Activated CD4-positive, alpha-beta memory T cell treated with anti-CD3 and anti-CD28 coated beads for 36 hours (primary cell): ENCODE measurements at regions of chr2 and their contacts with region 1.

Region 1: DNA sequence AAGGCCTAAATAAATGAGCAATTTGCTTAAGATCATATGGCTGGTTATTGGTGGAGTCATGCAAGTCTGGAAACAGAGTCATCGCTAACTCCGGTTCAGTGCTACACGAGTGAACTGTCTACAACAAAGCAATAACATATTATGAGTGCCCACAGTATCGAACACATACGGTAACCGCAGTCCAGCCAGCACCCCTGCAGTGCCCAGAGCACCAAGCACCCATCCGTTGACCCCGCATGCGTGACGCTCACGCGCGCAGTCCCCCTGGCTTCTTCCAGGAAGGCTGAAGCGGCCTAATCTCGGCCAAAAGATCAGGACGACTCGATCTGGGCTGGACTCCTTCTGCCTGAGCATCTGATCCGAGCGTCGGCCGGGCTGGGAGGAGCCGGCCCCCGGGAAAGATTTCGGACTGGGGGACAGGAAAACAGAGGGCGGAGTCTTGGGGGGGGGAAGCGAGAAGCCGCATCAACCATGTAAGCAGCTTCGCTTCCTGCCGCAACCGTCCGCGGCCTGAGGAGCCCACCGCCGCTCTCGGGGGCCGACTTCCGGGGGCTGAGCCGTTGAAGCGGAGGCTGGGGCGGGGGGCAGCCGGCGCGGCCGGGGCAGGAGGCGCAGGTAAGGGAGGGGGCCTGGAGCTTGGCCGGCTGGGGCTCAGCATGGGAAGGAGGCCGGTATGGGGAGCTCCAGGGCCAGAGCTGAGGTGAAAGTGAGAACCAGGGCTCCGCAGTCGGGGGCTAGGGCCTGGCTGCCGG is at the start of gene PIKFYVE:
- DNase-seq: peak; percentile 95
- H3K4me3 Mint-ChIP-seq: peak within 1 kb of the TSS; percentile 89
- H3K27ac Mint-ChIP-seq: peak within 1 kb of the TSS; percentile 98
- H3K4me1 Mint-ChIP-seq: peaks cover 32% of the 10 kb centered on the region
- H3K27me3 Mint-ChIP-seq: no peaks in the 10 kb centered on the region
- total RNA-seq, gene PIKFYVE: 22.4 to 23.7 TPM

Region 2: GRCh38 chr2:206765242-206766056 is 1500.5 kb before region 1 on chr2 and contains the starts of genes FASTKD2 and MDH1B:
- CTCF ChIA-PET with region 1: no interaction called
- POLR2A ChIA-PET with region 1: no interaction called
- intact Hi-C with region 1: loop called (anchors 5 kb)
- DNase-seq: peak; percentile 94
- H3K4me3 Mint-ChIP-seq: peak within 1 kb of the TSS; percentile 93
- H3K27ac Mint-ChIP-seq: peak within 1 kb of the TSS; percentile 96
- H3K4me1 Mint-ChIP-seq: peaks cover 31% of the 10 kb centered on the region
- H3K27me3 Mint-ChIP-seq: no peaks in the 10 kb centered on the region
- total RNA-seq, gene FASTKD2: 31.3 to 32.0 TPM
- total RNA-seq, gene MDH1B: 0.74 to 0.87 TPM

Region 3: GRCh38 chr2:207710814-207711740 is 554.9 kb before region 1 on chr2 and contains the start of gene CCNYL1:
- CTCF ChIA-PET with region 1: no interaction called
- POLR2A ChIA-PET with region 1: no interaction called
- intact Hi-C with region 1: loop called (anchors 5 kb)
- DNase-seq: peak; percentile 99
- H3K4me3 Mint-ChIP-seq: peak within 1 kb of the TSS; percentile 88
- H3K27ac Mint-ChIP-seq: peak within 1 kb of the TSS; percentile 82
- H3K4me1 Mint-ChIP-seq: peaks cover 25% of the 10 kb centered on the region
- H3K27me3 Mint-ChIP-seq: no peaks in the 10 kb centered on the region
- total RNA-seq, gene CCNYL1: 5.7 to 6.4 TPM

Region 4: DNA sequence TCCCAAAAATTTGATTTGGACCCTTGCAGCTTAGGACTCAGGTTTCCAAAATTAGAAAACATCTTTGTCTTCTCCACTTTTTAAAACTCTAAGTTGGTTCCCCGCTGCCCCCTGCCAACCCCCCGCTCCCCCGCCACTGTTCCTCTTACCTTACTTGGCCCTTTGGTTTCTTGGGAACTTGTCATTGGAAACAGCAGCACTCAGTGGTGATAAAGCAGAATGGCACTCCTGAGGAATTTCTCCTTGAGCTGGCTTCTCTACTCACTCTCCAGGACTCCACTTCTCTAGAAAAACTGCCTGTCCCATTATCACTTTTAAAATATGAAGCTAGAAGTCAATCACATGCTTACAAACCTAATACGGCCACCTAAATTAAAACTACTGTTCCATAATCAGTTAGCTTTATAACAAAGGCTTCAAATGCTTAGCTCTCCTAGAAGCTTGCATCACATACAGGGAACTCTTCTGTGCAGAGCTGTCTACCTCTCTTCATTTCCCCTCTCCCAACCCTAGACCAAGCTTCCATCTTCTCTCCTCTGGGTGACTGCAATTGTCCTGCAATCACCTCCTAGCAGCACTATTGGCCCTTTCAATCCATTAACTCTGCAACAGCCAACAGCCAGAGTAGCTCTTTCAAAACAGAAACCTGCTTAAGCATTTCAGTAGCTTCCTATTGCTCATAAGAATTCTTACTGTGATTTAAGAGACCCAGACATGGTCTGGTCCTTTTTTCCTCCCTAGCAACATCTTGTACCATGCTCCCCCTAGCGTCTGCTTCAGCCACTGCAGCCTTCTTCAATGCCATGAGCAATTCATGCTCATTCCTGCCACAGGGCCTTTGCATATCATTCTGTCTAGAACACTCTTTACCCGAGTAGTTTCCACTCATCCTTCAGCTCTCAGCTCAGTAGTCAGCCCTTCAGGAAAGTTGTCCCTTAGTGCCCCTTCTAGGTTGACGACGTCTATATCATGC is 225.5 kb before region 1 on chr2:
- CTCF ChIA-PET with region 1: no interaction called
- POLR2A ChIA-PET with region 1: no interaction called
- intact Hi-C with region 1: no loop called
- DNase-seq: peak; percentile 88
- H3K4me3 Mint-ChIP-seq: no peak overlapping the region
- H3K27ac Mint-ChIP-seq: no peak overlapping the region
- H3K4me1 Mint-ChIP-seq: peaks cover 4% of the 10 kb centered on the region
- H3K27me3 Mint-ChIP-seq: peaks cover 5% of the 10 kb centered on the region

Region 5: DNA sequence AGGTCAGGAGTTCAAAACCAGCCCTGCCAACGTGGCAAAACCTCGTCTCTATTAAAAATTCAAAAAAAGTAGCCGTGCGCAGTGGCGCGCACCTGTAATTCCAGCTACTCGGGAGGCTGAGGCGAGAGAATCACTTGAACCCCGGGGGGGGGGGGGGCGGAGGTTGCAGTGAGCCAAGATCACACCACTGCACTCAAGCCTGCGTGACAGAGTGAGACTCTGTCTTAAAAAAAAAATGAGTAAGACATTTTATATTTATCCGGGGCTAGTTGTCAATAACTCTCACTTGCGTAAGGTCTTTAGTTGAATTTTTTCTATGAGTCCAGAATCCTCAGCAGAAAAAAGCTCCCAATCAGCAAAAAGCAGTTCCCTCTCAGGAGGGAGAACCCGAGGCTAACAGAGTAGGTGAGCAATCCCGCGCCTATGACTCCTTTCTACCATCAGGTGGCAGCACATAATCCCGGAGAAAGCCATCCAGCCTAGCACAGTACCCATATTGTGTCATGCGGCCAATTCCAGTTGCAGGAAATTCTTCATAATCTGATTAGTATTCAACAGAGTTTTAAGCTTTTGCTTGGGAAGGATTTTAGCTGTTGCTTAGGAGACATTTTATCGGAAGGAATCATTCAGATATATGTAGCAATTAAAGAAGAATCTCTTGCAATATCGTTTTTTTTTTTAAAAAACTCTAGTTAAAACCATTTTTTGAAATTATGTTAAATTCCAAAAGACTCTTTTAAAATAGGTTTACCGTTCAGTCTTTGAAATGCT is 90.7 kb before region 1 on chr2:
- CTCF ChIA-PET with region 1: interaction called, 13 read pairs
- POLR2A ChIA-PET with region 1: no interaction called
- intact Hi-C with region 1: no loop called
- DNase-seq: peak; percentile 73
- H3K4me3 Mint-ChIP-seq: no peak overlapping the region
- H3K27ac Mint-ChIP-seq: no peak overlapping the region
- H3K4me1 Mint-ChIP-seq: no peaks in the 10 kb centered on the region
- H3K27me3 Mint-ChIP-seq: peaks cover 12% of the 10 kb centered on the region

Region 6: DNA sequence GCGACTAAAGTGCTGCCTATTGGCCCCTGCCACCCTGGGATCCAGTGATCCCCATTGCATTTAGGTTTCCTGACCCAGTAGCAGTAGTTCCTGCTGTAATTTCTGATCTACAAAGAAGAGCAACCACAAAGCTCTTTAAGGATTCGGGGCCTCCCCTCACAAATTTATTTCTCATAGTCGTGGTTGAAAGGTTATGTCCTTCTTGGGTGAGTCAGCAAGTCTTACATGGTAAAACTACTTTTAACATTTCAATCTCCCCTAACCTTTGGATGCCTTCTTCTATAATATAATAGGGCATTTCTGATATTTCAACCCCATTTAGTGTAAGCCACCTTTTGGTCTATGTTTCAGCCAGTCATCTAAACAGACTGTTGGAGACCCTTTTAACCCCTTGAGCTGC is 15.0 kb after region 1 on chr2:
- CTCF ChIA-PET with region 1: interaction called, 3 read pairs
- POLR2A ChIA-PET with region 1: no interaction called
- intact Hi-C with region 1: loop called (anchors 1 kb)
- DNase-seq: no peak
- H3K4me3 Mint-ChIP-seq: no peak overlapping the region
- H3K27ac Mint-ChIP-seq: peak overlapping the region; percentile 11
- H3K4me1 Mint-ChIP-seq: peaks cover 28% of the 10 kb centered on the region
- H3K27me3 Mint-ChIP-seq: no peaks in the 10 kb centered on the region

Region 7: GRCh38 chr2:209423562-209424198 is 1157.7 kb after region 1 on chr2 and contains the start of gene MAP2:
- CTCF ChIA-PET with region 1: no interaction called
- POLR2A ChIA-PET with region 1: no interaction called
- intact Hi-C with region 1: loop called (anchors 10 kb)
- DNase-seq: peak; percentile 77
- H3K4me3 Mint-ChIP-seq: peak within 1 kb of the TSS; percentile 57
- H3K27ac Mint-ChIP-seq: no peak within 1 kb of the TSS
- H3K4me1 Mint-ChIP-seq: peaks cover 10% of the 10 kb centered on the region
- H3K27me3 Mint-ChIP-seq: peaks cover 25% of the 10 kb centered on the region
- total RNA-seq, gene MAP2: 0.07 to 0.27 TPM

Region 8: DNA sequence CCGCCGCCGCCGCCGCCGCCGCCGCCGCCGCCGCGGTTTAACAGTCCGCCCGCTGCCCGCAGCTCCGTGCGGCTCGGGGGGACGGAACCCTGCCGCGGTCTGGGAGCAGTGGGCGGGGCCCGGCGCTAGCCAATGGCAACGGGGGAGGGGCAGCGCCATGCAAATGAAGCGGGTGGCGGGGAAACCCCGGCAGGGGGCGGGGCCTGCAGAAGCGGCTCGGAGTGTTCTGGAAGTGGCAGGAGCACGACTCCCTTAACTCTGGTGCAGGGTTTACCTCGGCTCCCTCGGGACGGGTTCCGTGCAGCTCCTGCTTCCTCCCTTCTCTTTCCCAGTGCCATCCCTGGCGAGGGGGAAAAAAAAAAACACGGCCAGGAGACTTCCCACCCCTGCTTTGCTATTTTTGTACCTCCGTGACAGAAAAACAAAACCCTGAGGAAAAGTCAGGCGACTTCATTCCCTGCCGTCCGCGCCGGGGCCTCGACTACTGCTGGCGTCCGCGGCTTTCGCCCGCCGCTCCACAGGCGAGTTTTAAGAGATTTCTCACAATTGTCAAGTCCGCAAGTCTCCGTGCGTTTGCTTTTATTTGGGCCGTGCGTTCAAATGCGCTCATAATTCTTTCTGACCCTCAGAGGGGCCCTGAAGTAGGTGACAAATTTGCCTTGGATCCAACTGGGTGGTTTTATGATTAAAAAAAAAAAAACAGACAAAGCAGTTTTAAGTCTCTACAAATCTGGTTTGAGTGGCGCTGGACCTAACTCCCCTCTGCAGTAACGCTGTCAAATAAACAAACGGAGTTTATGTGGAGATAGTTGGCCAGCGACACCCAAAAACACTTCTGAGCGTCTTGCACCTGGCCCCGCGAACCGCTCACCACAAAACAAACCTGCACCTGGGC is 1905.6 kb after region 1 on chr2 and contains the start of gene KANSL1L:
- CTCF ChIA-PET with region 1: no interaction called
- POLR2A ChIA-PET with region 1: no interaction called
- intact Hi-C with region 1: loop called (anchors 5 kb)
- DNase-seq: peak; percentile 97
- H3K4me3 Mint-ChIP-seq: peak within 1 kb of the TSS; percentile 94
- H3K27ac Mint-ChIP-seq: peak within 1 kb of the TSS; percentile 96
- H3K4me1 Mint-ChIP-seq: peaks cover 26% of the 10 kb centered on the region
- H3K27me3 Mint-ChIP-seq: peaks cover 3% of the 10 kb centered on the region
- total RNA-seq, gene KANSL1L: 4.0 to 4.6 TPM